ENCODE measurements at regions of chr14 and their contacts with region 1.

Region 1: GRCh38 chr14:37903343-37904191 is 304.1 kb upstream of the SSTR1 start:
- DNase-seq: peak in 1 of 10 donors; percentile 6

Region 2: DNA sequence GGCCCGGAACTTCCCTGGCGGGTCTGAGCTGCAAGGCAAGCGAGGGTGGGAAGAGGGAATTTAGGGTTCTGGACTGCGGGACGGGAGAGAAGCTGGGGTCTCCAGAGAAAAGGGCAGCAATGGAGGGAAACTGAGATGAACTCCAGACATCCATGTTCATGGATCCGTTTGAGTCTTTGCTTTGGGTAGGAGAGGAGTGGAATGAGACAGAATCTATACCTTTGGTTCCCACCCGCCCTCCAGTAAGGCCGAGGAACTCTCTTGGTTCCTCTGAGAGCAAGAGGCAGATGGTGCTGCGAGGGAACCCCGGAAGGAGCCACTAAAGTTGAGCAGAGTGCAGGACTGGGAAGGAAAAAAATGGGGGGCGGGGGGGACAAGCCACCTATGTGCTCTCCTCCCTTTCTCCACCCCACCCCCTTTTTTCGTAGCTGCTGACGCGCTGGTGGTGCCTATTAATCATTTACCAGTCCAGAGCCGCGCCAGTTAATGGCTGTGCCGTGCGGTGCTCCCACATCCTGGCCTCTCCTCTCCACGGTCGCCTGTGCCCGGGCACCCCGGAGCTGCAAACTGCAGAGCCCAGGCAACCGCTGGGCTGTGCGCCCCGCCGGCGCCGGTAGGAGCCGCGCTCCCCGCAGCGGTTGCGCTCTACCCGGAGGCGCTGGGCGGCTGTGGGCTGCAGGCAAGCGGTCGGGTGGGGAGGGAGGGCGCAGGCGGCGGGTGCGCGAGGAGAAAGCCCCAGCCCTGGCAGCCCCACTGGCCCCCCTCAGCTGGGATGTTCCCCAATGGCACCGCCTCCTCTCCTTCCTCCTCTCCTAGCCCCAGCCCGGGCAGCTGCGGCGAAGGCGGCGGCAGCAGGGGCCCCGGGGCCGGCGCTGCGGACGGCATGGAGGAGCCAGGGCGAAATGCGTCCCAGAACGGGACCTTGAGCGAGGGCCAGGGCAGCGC is 305.3 kb after region 1 on chr14:
- intact Hi-C with region 1: loop called (anchors 10 kb)
- DNase-seq: peak in 7 of 10 donors; percentile 29 to 92 (median 40)

Measured in posterior cingulate gyrus (tissue), 11 donors.